Activated B cell treated with CpG ODN at 0.5 μM for 24 hours (primary cell): ENCODE measurements at regions of chr11 and their contacts with region 1.

Region 1: DNA sequence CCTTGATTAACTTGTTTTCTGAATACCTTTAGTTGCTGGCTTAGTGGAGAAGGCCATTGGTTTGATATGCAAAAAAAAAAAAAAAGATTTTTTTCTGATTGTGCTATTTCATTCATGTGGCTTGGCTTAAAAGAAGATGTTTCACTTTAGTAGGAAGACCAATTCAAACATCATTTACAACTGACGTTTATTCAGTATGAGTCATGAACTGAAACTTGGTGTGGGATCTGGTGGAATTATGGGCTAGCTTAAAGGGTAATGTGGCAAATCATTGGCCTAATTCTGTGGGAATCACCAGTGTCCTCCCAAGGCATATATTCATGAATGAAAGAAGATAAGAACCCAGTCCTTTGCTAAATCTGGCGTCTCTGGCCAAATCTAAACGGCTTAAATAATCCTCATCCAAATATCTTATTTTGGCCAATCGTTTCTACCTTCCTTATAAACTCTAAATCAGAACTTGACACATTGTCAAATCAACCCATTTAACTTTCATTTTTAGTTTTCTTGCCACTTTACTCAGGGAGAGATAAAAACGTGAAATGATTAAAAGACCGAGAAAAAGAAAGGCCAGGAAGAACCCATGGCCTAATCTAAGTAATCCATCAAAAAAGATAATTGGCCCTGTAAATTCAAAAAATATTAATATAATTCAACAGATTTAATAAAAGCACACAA is 77.0 kb downstream of the DDIAS start:
- DNase-seq: no peak
- ATAC-seq: peak; percentile 42
- H3K4me3 Mint-ChIP-seq: no peak overlapping the region
- H3K27ac Mint-ChIP-seq: peak overlapping the region; percentile 57
- H3K4me1 Mint-ChIP-seq: peaks cover 54% of the 10 kb centered on the region
- H3K27me3 Mint-ChIP-seq: no peaks in the 10 kb centered on the region
- CTCF ChIP-seq: no peak

Region 2: GRCh38 chr11:82906244-82906654 is 72.3 kb before region 1 on chr11:
- CTCF ChIA-PET with region 1: no interaction called
- POLR2A ChIA-PET with region 1: no interaction called
- intact Hi-C with region 1: loop called (anchors 5 kb)
- DNase-seq: no peak
- ATAC-seq: no peak
- H3K4me3 Mint-ChIP-seq: no peak overlapping the region
- H3K27ac Mint-ChIP-seq: peak overlapping the region; percentile 38
- H3K4me1 Mint-ChIP-seq: peaks cover 44% of the 10 kb centered on the region
- H3K27me3 Mint-ChIP-seq: no peaks in the 10 kb centered on the region
- CTCF ChIP-seq: peak; percentile 35

Region 3: GRCh38 chr11:82959987-82960778 is 18.4 kb before region 1 on chr11:
- CTCF ChIA-PET with region 1: interaction called, 3 read pairs
- POLR2A ChIA-PET with region 1: no interaction called
- intact Hi-C with region 1: loop called (anchors 2 kb)
- DNase-seq: no peak
- ATAC-seq: peak; percentile 71
- H3K4me3 Mint-ChIP-seq: peak overlapping the region; percentile 46
- H3K27ac Mint-ChIP-seq: peak overlapping the region; percentile 87
- H3K4me1 Mint-ChIP-seq: peaks cover 66% of the 10 kb centered on the region
- H3K27me3 Mint-ChIP-seq: no peaks in the 10 kb centered on the region
- CTCF ChIP-seq: no peak